ENCODE measurements at regions of chr1 and their contacts with region 1.

Region 1: DNA sequence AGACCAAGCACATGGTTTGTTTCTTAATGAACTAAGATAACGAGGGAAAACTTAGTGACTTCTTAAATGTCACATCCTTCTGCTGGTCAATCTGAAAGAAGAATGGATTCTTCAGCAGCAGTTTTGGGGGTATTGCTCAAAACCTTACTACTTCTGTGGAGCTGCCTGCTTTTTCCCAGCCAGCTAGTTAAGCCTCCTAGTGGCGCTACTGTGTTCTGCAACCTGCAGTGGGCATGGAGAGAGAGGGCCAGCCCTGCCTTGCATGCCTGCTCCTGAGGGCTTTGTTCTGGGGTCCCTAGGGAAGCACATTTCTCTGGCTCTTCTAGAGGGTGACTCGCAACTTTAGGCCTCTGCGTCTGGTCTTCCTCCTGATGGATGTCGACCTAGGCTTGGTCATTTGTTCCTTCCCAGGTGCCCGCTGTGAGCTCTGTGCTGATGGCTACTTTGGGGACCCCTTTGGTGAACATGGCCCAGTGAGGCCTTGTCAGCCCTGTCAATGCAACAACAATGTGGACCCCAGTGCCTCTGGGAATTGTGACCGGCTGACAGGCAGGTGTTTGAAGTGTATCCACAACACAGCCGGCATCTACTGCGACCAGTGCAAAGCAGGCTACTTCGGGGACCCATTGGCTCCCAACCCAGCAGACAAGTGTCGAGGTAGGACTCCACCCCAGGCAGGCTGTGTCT is 42.0 kb downstream of the LAMC2 start:
- DNase-seq: peak; percentile 66
- H3K4me3 Mint-ChIP-seq: no peak overlapping the region
- H3K27ac Mint-ChIP-seq: no peak overlapping the region
- H3K4me1 Mint-ChIP-seq: peaks cover 5% of the 10 kb centered on the region
- H3K27me3 Mint-ChIP-seq: no peaks in the 10 kb centered on the region

Region 2: DNA sequence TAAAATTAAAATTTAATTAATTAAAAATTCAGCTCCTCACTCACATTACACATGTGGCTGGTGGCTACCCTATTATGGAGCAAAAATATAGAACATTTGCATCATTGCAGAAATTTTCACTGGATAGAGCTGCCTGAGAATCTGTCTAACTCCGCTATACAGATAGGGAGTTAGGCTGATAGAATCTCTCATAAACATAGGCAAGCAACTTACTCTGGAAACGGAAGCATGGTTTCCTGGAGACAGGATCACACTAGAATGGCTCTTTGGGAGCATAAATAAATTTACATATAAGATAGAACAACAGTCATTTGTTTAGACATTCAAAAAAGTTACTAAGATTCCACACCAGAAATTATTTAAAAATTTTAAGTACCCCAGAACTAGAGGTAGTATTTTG is 54.3 kb before region 1 on chr1:
- CTCF ChIA-PET with region 1: interaction called, 3 read pairs
- intact Hi-C with region 1: loop called (anchors 5 kb)
- DNase-seq: no peak
- H3K4me3 Mint-ChIP-seq: no peak overlapping the region
- H3K27ac Mint-ChIP-seq: no peak overlapping the region
- H3K4me1 Mint-ChIP-seq: no peaks in the 10 kb centered on the region
- H3K27me3 Mint-ChIP-seq: no peaks in the 10 kb centered on the region